Naive thymus-derived CD4-positive, alpha-beta T cell (primary cell): ENCODE measurements at regions of chr12 and their contacts with region 1.

Region 1: GRCh38 chr12:110280779-110281548 is at the start of gene ATP2A2:
- DNase-seq: peak; percentile 87 to 93 (median 91)
- ATAC-seq: peak; percentile 96
- H3K4me3 ChIP-seq: peak within 1 kb of the TSS; percentile 83
- H3K4me3 Mint-ChIP-seq: peak within 1 kb of the TSS; percentile 87 to 96 (median 93)
- H3K27ac ChIP-seq: peak within 1 kb of the TSS; percentile 92
- H3K27ac Mint-ChIP-seq: peak within 1 kb of the TSS; percentile 84 to 93 (median 89)
- H3K4me1 ChIP-seq: peaks cover 12 to 27% of the 10 kb centered on the region in 2 donors
- H3K4me1 Mint-ChIP-seq: peaks cover 39 to 50% (median 48%) of the 10 kb centered on the region in 7 donors
- H3K27me3 ChIP-seq: no peaks in the 10 kb centered on the region
- H3K27me3 Mint-ChIP-seq: peaks cover 0 to 11% (median 0%) of the 10 kb centered on the region in 5 donors
- total RNA-seq, gene ATP2A2: 81.4 to 160 (median 83.9) TPM

Region 2: DNA sequence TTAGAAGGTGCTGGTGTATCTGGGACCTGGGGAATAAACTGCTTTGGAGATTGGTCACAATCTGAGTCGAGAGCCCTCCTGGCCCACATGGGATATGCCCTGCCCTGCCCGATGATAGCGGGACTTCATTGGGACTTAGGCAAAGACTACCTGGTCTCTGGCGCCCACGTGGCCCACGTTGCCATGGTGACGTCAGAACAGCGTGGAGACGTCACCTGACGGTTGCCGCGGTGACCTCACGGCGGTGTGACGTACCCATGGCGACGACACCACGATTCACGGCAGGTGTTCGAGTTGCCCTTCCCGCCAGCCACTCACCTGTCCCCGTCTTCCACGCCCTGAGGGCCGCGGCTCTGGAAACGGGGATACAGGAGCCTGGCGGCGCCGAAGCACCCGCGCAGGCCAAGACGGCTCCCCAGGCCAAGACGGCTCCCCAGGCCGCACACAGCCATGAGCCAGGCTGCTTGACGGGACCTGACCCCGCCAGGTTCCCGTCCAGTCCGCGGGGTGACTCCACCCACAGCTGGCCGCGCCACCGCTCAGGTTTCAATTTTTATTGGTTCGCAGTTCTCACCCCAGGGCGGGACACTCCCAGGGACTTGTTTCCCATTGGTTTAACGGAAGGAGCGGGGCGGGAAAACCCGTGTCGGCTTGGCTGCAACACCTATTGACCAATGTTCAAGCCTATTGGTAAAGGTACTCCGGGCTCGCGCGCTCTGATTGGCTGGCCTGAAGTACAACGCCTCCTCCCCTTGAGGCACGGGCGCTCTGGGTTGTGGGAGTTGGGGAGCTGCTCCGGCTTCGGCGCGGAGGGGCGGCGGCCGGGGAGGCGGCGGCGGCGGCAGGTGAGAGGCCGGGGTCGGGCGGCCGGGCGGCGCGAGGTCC is 707.7 kb before region 1 on chr12 and contains the starts of genes MMAB and MVK:
- CTCF ChIA-PET with region 1: no interaction called
- POLR2A ChIA-PET with region 1: no interaction called
- intact Hi-C with region 1: loop called in 1 of 2 experiments (anchors 5 kb)
- DNase-seq: peak; percentile 87 to 99 (median 99)
- ATAC-seq: peak; percentile 97
- H3K4me3 ChIP-seq: peak within 1 kb of the TSS; percentile 75
- H3K4me3 Mint-ChIP-seq: peak within 1 kb of the TSS; percentile 90 to 97 (median 94)
- H3K27ac ChIP-seq: peak within 1 kb of the TSS; percentile 95
- H3K27ac Mint-ChIP-seq: peak within 1 kb of the TSS; percentile 87 to 100 (median 95)
- H3K4me1 ChIP-seq: peaks cover 13 to 16% of the 10 kb centered on the region in 2 donors
- H3K4me1 Mint-ChIP-seq: peaks cover 9 to 39% (median 36%) of the 10 kb centered on the region in 7 donors
- H3K27me3 ChIP-seq: no peaks in the 10 kb centered on the region
- H3K27me3 Mint-ChIP-seq: no peaks in the 10 kb centered on the region
- total RNA-seq, gene MMAB: 13.5 to 24.7 (median 20.1) TPM
- total RNA-seq, gene MVK: 10.0 to 14.8 (median 11.7) TPM

Region 3: DNA sequence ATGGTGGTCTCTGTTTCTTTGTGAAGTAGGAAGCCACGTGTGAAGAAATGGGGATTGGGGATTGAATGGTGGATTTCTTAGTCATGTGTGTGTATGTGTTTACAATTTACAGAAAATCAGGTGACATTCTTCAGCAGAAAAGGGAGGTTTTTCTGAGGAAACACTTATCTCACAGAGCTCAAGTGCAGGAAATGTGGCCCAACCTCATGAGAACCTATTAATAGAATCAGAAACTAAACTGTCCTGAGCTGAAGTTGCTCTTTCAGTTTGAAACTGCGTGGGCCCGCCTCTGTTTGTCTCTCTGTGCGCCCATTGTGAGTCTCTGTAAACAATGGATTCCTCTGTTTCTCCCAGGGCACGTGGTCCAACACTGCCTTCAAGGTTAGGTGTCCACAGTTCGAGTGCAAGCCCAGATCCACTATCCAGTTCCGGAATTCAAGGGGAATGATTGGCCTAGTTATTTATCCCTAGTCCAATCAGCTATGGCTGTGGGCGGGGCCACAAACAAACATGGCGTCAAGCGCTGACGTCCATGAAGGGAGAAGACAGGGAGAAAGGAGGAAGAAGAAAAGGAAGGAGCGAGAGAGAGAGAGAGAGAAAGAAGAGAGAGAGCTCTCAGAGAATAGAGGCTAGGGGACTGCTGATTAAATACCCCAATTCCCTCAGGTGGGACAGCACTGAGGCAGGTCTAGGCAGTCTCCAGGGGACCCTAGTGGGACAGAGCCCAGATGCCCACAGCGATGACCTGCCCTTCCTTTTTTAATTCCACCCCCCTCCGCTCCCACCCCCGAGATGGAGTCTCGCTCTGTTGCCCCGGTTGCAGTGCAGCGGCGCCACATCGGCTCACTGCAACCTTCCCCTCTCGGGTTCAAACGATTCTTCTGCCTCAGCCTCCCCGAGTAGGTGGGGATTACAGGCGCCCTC is 201.2 kb before region 1 on chr12:
- CTCF ChIA-PET with region 1: no interaction called
- POLR2A ChIA-PET with region 1: no interaction called
- intact Hi-C with region 1: loop called in 1 of 2 experiments (anchors 1 kb)
- DNase-seq: peak; percentile 44 to 83 (median 75)
- ATAC-seq: peak; percentile 96
- H3K4me3 ChIP-seq: peak overlapping the region; percentile 42
- H3K4me3 Mint-ChIP-seq: peak overlapping the region; percentile 76 to 94 (median 86)
- H3K27ac ChIP-seq: peak overlapping the region; percentile 71
- H3K27ac Mint-ChIP-seq: peak overlapping the region; percentile 92 to 99 (median 98)
- H3K4me1 ChIP-seq: peaks cover 9 to 21% of the 10 kb centered on the region in 2 donors
- H3K4me1 Mint-ChIP-seq: peaks cover 13 to 47% (median 26%) of the 10 kb centered on the region in 7 donors
- H3K27me3 ChIP-seq: no peaks in the 10 kb centered on the region
- H3K27me3 Mint-ChIP-seq: peaks cover 0 to 5% (median 0%) of the 10 kb centered on the region in 5 donors

Region 4: GRCh38 chr12:110304061-110304551 is 23.1 kb after region 1 on chr12:
- CTCF ChIA-PET with region 1: no interaction called
- POLR2A ChIA-PET with region 1: no interaction called
- intact Hi-C with region 1: loop called in 1 of 2 experiments (anchors 2 kb)
- DNase-seq: no peak
- ATAC-seq: no peak
- H3K4me3 ChIP-seq: no peak overlapping the region
- H3K4me3 Mint-ChIP-seq: no peak overlapping the region
- H3K27ac ChIP-seq: no peak overlapping the region
- H3K27ac Mint-ChIP-seq: peak overlapping the region in 2 of 9 donors; percentile 28 to 32
- H3K4me1 ChIP-seq: peaks cover 0 to 8% of the 10 kb centered on the region in 2 donors
- H3K4me1 Mint-ChIP-seq: peaks cover 35 to 66% (median 54%) of the 10 kb centered on the region in 7 donors
- H3K27me3 ChIP-seq: no peaks in the 10 kb centered on the region
- H3K27me3 Mint-ChIP-seq: no peaks in the 10 kb centered on the region

Region 5: GRCh38 chr12:110431957-110432587 is 151.1 kb after region 1 on chr12:
- CTCF ChIA-PET with region 1: interaction called, 3 read pairs
- POLR2A ChIA-PET with region 1: no interaction called
- intact Hi-C with region 1: loop called (anchors 2 kb)
- DNase-seq: no peak
- ATAC-seq: no peak
- H3K4me3 ChIP-seq: no peak overlapping the region
- H3K4me3 Mint-ChIP-seq: peak overlapping the region in 4 of 10 donors; percentile 91 to 100 (median 96)
- H3K27ac ChIP-seq: no peak overlapping the region
- H3K27ac Mint-ChIP-seq: peak overlapping the region in 3 of 9 donors; percentile 96 to 99 (median 98)
- H3K4me1 ChIP-seq: no peaks in the 10 kb centered on the region
- H3K4me1 Mint-ChIP-seq: peaks cover 0 to 5% (median 0%) of the 10 kb centered on the region in 7 donors
- H3K27me3 ChIP-seq: no peaks in the 10 kb centered on the region
- H3K27me3 Mint-ChIP-seq: peaks cover 0 to 3% (median 0%) of the 10 kb centered on the region in 5 donors

Region 6: DNA sequence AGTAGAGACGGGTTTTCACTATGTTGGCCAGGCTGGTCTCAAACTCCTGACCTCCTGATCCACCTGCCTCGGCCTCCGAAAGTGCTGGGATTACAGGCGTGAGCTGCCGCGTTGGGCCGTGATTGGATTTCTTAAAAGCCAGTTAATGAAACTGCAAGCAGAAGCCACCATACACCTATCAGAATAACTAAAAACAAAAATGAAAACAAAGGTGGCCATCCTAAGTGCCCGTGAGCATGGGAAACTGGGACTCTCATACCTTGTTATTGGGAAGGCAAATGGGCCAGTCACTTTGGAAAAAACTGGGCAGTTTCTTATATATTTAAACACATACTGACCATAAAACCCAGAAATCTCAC is 325.3 kb after region 1 on chr12:
- CTCF ChIA-PET with region 1: no interaction called
- POLR2A ChIA-PET with region 1: no interaction called
- intact Hi-C with region 1: loop called (anchors 5 kb)
- DNase-seq: no peak
- ATAC-seq: no peak
- H3K4me3 ChIP-seq: peak overlapping the region; percentile 56
- H3K4me3 Mint-ChIP-seq: peak overlapping the region; percentile 83 to 94 (median 90)
- H3K27ac ChIP-seq: peak overlapping the region; percentile 45
- H3K27ac Mint-ChIP-seq: peak overlapping the region; percentile 85 to 96 (median 88)
- H3K4me1 ChIP-seq: no peaks in the 10 kb centered on the region
- H3K4me1 Mint-ChIP-seq: peaks cover 8 to 24% (median 15%) of the 10 kb centered on the region in 7 donors
- H3K27me3 ChIP-seq: no peaks in the 10 kb centered on the region
- H3K27me3 Mint-ChIP-seq: no peaks in the 10 kb centered on the region